Activated CD4-positive, alpha-beta memory T cell treated with anti-CD3 and anti-CD28 coated beads, Interleukin-2, amount 10 ng/mL, durations not matched to agents 7 days and 5 days (primary cell): ENCODE measurements at regions of chr3 and their contacts with region 1.

Region 1: DNA sequence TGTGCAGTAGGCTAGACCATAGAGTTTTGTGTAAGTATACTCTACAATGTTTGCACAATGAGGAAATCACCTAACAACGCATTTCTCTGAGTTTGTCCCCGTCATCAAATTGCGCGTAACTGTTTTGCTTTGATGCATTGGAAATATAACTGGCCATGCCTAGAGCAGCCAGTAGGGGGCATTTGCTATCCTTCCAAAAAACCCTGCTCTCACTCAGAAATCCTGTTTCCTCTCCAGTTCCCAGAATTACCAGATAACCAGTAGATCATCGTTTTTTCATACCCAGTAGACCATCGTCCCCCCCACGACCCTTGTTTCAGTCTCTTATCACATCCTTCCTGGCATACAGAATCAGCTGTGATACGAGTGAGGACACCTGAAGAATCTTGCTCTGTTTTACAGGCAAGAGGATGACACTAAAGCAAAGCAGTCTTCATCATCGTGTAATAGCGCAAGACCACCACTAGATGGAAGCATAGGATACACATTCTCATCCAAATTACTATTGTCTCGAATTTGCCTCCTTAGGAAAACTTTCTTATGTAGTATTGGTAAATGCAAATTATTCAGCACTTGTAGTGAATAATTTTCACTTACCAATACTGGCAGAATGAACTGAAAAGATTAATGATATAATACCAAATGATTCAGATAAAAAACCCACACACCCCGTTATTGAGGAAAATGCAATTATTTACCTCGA is 4.4 kb upstream of the GABRR3 start:
- DNase-seq: peak; percentile 83
- H3K4me3 Mint-ChIP-seq: peak overlapping the region; percentile 76
- H3K27ac Mint-ChIP-seq: peak overlapping the region; percentile 87
- H3K4me1 Mint-ChIP-seq: peaks cover 24% of the 10 kb centered on the region
- H3K27me3 Mint-ChIP-seq: peaks cover 22% of the 10 kb centered on the region

Region 2: DNA sequence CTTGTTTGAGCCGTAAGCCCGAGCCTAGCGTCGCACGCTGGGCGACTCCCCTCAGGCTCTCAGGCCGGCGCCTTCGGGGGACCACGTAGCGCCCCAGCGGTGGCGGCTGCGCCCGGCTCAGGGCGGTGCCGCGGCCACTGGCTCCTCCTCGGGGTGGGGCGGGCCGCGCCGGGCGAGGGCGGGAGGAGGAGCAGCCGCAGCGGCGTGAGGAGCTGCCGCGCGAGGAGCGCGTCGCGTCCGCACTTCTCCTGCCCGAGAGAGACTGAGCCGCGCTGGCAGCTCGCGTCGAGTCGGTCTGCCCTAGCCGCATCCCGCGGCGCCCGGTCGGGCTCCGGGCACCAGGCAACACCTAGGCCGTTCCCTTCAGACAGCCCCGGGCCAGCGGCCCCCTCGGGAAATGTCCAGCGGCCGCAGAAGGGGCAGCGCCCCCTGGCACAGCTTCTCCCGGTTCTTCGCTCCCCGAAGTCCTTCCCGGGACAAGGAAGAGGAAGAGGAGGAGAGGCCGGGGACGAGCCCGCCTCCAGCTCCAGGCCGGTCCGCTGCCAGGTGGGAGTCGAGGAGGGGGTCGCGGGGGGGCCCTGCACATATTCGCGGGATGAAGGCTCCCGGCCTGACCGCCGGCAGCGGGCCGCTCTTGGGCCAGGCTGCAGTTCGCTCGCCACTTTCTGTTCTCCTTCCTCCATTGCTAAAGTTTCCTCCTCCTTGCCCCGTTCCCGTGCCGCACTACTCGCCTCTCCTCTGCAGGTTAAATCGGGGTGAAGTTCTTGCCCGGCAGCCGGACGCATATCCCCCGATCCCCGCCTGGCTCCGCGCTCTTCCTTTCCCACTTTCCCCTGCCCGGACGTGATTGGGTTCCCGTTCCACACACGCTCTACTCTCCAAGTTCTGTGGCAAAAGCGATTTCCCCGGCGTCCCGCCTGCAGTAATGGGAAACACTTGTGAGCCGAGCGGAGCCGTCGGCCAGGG is 217.4 kb before region 1 on chr3 and contains the start of gene CRYBG3:
- CTCF ChIA-PET with region 1: interaction called, 16 read pairs
- POLR2A ChIA-PET with region 1: interaction called, 7 read pairs
- DNase-seq: peak; percentile 89
- H3K4me3 Mint-ChIP-seq: peak within 1 kb of the TSS; percentile 93
- H3K27ac Mint-ChIP-seq: peak within 1 kb of the TSS; percentile 84
- H3K4me1 Mint-ChIP-seq: peaks cover 40% of the 10 kb centered on the region
- H3K27me3 Mint-ChIP-seq: peaks cover 19% of the 10 kb centered on the region
- total RNA-seq, gene CRYBG3: 12.8 to 13.1 TPM

Region 3: GRCh38 chr3:98329392-98330124 is 290.1 kb after region 1 on chr3:
- CTCF ChIA-PET with region 1: interaction called, 41 read pairs
- POLR2A ChIA-PET with region 1: no interaction called
- DNase-seq: peak; percentile 57
- H3K4me3 Mint-ChIP-seq: no peak overlapping the region
- H3K27ac Mint-ChIP-seq: no peak overlapping the region
- H3K4me1 Mint-ChIP-seq: peaks cover 28% of the 10 kb centered on the region
- H3K27me3 Mint-ChIP-seq: peaks cover 12% of the 10 kb centered on the region

Region 4: GRCh38 chr3:98593046-98593936 is 553.8 kb after region 1 on chr3 and contains the start of gene CPOX:
- CTCF ChIA-PET with region 1: interaction called, 6 read pairs
- POLR2A ChIA-PET with region 1: interaction called, 14 read pairs
- DNase-seq: peak; percentile 92
- H3K4me3 Mint-ChIP-seq: peak within 1 kb of the TSS; percentile 94
- H3K27ac Mint-ChIP-seq: peak within 1 kb of the TSS; percentile 87
- H3K4me1 Mint-ChIP-seq: peaks cover 49% of the 10 kb centered on the region
- H3K27me3 Mint-ChIP-seq: no peaks in the 10 kb centered on the region
- total RNA-seq, gene CPOX: 75.9 to 78.0 TPM

Region 5: GRCh38 chr3:98817547-98818041 is 778.1 kb after region 1 on chr3:
- CTCF ChIA-PET with region 1: interaction called, 18 read pairs
- POLR2A ChIA-PET with region 1: no interaction called
- DNase-seq: no peak
- H3K4me3 Mint-ChIP-seq: no peak overlapping the region
- H3K27ac Mint-ChIP-seq: no peak overlapping the region
- H3K4me1 Mint-ChIP-seq: no peaks in the 10 kb centered on the region
- H3K27me3 Mint-ChIP-seq: no peaks in the 10 kb centered on the region